GM10248 (cell line): ENCODE measurements at regions of chr16 and their contacts with region 1.

Region 1: GRCh38 chr16:17467923-17468540 is 2.7 kb downstream of the XYLT1 start:
- DNase-seq: no peak
- CTCF ChIP-seq: peak; percentile 69

Region 2: DNA sequence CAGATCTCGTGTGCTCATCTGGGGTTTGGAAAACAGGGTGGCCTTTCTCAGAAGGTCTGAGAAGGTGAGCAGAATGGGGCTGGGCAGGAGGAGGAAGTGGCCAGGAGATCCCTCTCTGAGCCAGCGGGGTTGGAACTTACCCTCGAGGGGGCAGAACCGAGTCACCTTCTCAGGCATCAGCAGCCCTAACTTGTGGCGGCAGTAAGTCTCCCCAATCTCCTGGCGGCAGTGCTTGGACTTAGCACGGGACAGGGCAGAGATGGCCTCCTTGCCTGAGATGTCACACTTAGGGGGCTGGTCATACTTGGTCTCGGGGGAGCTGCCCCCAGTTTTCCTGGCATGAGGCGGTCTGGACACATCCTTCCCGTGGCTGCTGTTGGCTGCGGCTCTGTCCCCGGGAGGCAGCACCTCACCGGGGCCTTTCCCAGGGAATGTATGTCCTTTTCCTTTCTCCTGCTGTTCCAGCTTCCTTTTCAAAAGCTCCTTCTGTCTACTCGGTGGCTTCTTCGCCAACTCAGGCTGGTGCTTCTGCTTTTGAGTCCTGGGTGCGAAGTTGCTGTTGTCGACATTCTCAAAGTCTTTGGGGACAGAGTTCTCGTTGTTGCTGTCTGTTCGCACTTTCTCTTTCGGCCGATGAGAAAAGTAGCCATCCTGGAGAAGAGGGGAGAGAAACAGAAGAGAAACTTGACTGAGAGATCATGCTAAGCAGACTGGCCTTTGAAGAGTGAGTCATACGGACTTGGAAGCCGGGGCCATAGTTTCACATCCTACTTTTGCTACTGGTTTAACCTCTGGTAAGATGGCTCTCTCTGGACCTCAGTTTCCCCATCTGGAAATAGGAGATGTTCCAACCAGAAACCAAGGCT is 209.0 kb before region 1 on chr16:
- CTCF ChIA-PET with region 1: interaction called, 19 read pairs
- POLR2A ChIA-PET with region 1: no interaction called
- DNase-seq: peak; percentile 82
- CTCF ChIP-seq: peak; percentile 60

Region 3: GRCh38 chr16:17283016-17283415 is 185.0 kb before region 1 on chr16:
- CTCF ChIA-PET with region 1: interaction called, 13 read pairs
- POLR2A ChIA-PET with region 1: no interaction called
- DNase-seq: no peak
- CTCF ChIP-seq: no peak

Region 4: DNA sequence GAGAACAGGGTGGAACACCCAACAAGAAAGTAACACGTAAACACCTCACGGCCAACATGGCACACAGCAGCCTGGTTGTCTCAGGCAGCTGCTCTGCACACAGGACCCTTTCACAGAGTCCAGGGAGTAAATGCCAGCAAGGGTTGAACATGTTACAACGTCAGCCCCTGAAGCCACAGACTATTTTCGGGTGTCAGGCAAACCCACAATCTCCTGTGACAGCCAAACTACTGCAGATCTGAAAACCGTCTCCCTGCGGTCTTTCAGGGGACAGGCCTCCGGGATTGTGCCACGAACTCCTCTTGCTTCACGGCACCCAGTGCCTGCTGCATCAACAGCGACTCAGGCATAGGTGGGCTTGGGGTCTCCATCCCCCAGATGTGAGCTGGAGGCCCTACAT is 125.0 kb before region 1 on chr16:
- CTCF ChIA-PET with region 1: interaction called, 26 read pairs
- POLR2A ChIA-PET with region 1: no interaction called
- DNase-seq: peak; percentile 54
- CTCF ChIP-seq: no peak

Region 5: GRCh38 chr16:17389384-17389783 is 78.6 kb before region 1 on chr16:
- CTCF ChIA-PET with region 1: no interaction called
- POLR2A ChIA-PET with region 1: no interaction called
- DNase-seq: no peak
- CTCF ChIP-seq: no peak

Region 6: DNA sequence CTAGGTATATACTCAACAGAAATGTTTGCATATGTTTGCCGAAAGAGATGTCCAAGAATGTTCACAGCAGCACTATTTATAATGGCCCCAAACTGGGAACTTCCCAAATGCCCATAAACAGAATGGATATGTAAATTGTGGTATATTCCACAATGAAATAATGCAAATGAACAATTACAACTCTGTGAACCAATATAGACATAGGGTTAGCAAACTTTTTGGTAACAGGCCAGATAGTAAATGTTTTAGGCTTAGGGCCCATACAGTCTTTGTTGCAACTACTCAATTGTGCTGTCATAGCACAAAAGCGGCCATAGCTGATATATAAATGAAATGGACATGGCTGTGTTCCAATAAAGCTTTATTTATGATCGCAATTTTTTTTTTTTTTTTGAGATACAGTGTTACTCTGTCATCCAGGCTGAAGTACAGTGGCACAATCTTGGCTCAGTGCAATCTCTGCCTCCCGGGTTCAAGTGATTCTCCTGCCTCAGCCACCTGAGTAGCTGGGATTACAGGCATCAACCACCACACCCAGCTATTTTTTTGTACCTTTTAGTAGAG is 13.8 kb before region 1 on chr16:
- CTCF ChIA-PET with region 1: interaction called, 15 read pairs
- POLR2A ChIA-PET with region 1: interaction called, 3 read pairs
- DNase-seq: no peak
- CTCF ChIP-seq: no peak

Region 7: DNA sequence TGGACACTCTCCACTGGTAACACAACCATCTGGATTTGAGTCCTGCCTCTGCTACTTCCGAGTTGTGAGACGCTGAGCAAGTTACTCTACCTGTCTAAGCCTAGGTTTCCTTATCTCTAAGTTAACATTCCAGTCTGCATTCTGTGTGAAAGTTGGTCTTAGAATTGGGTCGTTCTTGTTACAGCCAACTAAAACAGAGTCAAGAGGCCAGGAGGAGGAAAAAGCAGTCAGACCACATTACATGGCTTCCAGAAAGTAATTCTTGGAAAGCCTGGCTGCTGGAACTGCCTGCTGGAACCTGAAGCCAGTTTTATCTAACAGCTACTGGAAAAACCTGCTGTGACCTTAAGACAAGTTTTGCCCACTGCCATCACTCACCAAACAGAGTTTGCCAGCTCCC is 41.2 kb after region 1 on chr16:
- CTCF ChIA-PET with region 1: no interaction called
- POLR2A ChIA-PET with region 1: no interaction called
- DNase-seq: no peak
- CTCF ChIP-seq: no peak

Region 8: GRCh38 chr16:17887963-17888362 is 419.9 kb after region 1 on chr16:
- CTCF ChIA-PET with region 1: no interaction called
- POLR2A ChIA-PET with region 1: no interaction called
- DNase-seq: no peak
- CTCF ChIP-seq: no peak